Dorsolateral prefrontal cortex (tissue), 120 donors: ENCODE measurements at regions of chr3 and their contacts with region 1.

Region 1: DNA sequence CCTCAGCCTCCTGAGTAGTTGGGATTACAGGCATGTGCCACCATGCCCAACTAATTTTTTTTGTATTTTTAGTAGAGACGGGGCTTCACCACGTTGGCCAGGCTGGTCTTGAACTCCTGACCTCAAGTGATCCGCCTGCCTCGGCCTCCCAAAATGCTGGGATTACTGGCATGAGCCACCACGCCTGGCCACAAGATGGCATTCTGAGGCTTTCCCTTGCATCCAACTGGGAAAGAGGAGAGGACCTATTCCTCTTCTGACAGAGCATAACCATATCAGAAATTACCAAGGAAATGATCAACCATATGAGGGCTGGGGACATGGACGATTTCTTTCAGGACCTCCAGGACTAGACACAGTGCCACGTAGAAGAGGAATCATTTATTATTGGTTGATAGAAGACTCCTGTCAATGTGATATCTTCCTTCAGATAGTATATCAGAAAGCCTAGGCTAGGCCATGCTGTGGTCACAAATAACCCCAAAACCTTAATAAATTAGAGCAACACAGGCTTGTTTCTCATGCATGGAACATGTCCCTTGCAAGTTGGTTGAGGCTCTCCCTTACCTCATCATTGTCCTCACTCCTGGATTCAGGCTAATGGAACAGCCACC is 372.3 kb upstream of the IL12A start:
- DNase-seq: peak in 6 of 10 donors; percentile 21 to 51 (median 34)
- H3K4me3 ChIP-seq: no peak overlapping the region
- H3K27ac ChIP-seq: no peak overlapping the region
- H3K27me3 ChIP-seq: no peaks in the 10 kb centered on the region
- CTCF ChIP-seq: peak in 55 of 56 donors; percentile 17 to 72 (median 54)

Region 2: DNA sequence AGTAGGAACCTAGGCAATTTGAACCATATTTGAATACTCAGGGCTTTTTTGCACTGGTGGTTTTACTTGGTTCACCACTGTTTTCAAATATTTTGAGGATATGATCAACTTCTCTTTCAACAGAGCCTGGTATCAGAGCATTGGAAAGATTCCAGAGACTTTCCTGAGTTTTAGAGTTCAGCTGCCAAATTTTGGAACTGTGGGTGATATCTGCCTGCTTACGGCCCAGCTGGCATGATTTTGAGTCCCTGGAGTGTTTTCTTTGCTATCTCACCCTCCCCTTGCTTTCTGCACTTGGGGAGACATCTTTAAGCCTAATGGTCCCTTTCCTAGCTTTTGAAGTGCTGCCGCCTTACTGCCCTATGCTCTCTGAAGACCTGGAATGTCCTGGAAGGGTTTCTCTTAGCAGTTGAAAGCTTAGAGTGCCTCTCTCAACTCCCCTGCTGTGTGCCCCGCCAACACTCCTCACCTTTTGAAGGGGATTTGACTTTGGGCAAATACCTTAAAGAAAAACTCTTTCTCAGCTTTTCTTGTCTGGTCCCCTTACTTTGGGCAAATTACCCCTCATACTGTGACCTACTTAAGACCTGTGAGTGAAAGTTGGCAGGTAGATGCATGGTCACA is 275.3 kb before region 1 on chr3:
- intact Hi-C with region 1: no loop called
- DNase-seq: no peak
- H3K4me3 ChIP-seq: no peak overlapping the region
- H3K27ac ChIP-seq: no peak overlapping the region
- H3K27me3 ChIP-seq: no peaks in the 10 kb centered on the region
- CTCF ChIP-seq: no peak

Region 3: DNA sequence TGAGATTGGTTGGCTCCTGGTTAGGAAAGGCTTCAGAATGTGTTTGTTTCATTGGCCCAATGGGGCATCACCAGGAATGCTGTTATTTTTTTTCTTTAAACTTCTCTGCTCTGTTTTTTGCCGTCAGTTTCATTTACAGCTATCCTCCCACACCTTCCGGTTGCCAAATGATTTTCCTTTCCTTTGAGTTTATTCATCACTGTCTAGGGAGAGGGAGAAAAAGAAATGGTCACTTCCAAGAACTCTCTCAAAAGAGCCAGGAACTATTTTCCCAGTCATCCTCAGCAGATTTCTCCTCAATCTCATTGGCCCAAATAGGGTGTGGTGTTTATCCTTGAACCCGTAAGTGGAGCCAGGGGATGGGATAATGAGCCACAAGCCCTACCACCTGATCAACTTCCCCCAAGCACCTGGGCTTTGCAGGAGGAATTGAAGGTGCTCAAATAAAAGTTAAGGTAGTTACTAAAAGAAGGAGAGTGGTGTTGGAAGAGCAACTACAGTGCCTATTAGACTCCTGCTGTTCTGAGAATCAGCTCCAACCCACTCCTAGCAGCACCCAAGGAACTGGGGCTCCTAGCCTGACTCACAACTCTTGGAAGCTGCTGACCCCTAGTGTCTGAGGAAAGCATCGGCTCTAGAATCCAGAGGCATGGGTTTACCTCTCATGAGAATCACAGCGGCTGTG is 188.5 kb after region 1 on chr3:
- intact Hi-C with region 1: loop called (anchors 2 to 5 kb)
- DNase-seq: peak in 9 of 10 donors; percentile 65 to 89 (median 81)
- H3K4me3 ChIP-seq: peak overlapping the region in 3 of 59 donors; percentile 5 to 10 (median 6)
- H3K27ac ChIP-seq: peak overlapping the region in 53 of 59 donors; percentile 6 to 98 (median 64)
- H3K27me3 ChIP-seq: no peaks in the 10 kb centered on the region
- CTCF ChIP-seq: peak; percentile 67 to 96 (median 90)

Region 4: DNA sequence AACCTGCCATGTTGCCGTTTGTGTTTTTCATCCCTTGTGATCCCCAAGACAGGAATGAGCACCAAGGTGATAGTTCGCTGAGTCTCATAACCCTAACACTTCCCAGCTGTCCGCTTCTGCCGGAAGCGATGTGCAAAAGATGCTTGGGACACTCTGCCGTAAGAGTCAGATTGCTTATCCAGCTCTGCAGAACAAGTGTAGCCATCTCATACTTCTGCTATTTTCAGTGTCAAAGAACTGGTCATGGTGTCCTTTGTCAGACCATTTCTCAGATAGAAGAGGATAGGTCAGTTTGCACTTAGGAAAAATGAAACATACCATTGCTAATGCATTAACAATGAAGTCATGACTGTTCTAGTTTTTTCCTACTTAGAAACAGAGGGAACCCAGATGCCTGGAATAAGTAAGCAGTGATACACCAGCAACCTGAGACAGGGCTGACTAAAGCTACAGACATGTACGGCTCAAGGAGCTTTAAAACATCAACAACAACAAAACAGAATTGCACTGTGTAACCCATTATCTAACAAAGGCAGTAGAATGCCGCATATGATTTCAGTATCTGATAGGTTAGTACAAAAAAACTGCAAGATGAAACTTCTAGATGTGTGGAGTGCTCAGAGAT is 238.3 kb after region 1 on chr3:
- intact Hi-C with region 1: no loop called
- DNase-seq: no peak
- H3K4me3 ChIP-seq: peak overlapping the region in 52 of 59 donors; percentile 2 to 66 (median 39)
- H3K27ac ChIP-seq: peak overlapping the region in 58 of 59 donors; percentile 61 to 100 (median 94)
- H3K27me3 ChIP-seq: no peaks in the 10 kb centered on the region
- CTCF ChIP-seq: peak in 1 of 56 donors; percentile 10